ENCODE measurements at regions of chr12 and their contacts with region 1.

Region 1: DNA sequence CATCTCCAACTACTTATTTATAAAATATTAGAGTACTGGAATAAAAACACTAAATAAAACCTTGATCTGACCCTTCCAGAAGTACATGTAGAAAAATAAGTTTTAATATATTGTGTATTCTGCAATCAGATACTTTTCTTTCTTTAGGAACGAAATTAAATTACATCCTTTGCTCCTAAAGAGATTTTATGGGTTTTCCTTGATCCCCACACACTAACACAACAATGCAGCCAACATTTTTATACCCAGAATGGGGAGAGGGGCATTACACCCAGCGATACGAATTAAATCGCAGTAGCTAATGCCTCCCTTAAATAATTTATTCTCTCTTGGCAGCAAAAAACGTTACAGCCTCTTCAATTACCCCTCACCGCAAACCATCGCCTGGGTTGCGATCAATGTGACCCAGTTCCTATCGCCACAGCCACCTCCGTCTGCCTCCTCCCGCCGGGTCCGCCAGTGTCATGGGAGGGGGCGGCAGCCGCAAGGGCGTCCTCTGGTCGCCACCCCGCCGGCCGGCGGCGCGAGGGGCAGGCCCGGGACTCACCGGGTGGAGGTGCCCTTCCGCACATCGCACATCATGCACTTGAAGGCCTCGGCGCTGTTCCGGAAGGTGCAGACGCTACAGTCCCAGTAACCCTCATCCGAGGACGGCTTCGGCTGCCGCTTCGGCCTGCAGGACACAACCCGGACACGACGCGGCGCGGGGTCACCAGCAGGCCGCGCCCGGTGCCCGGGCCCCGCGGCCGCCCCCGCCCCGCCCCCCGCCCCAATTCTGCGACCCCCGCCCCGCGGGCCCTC is 796 bp downstream of the YAF2 start:
- DNase-seq: peak; percentile 82 to 86
- ATAC-seq: peak; percentile 86

Region 2: DNA sequence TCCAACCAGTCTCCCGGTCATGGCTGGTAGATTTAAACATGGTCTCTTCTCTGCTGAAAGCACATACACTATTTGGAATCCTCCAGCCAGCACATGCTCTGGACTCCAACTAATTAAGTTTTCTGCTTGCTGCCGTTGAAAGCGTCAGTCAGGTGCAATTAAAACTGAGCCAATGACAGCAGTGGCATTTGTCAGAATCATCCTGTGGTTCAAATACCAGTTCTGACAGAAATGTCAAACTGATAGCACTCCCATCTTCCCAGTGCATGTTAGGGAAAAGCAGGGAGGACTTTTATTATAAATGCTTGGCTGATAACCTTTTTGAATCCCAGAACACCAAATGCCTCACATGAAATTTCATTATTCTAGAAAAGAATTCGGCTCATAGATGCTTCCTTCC is 647.4 kb before region 1 on chr12:
- intact Hi-C with region 1: no loop called
- DNase-seq: no peak
- ATAC-seq: no peak

Region 3: DNA sequence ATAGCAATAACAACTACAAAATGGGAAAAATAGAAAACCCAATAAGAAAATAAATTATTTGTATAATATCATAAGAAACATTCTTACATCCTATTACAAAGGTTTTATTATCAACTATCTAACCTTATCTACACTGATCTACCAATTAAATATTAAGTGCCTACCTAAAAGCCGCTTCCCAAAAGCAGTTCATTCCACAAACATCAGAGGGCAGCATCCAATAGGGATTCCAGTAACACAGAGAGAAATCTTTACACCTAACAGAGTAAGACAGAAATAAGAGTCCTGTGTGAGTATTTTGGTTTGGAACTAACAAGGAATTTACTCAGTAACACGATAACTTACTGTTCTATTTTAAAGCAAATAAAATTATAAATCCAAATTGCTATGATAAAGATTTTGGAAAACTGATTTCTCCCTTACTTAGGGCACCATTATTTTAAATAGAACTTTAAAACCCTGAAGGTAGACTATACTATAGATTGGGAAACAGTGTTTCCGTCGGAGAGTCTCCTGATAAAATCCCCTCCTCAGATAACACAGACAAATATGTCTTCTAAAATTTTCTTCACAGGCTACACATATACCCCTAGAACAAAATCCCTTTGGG is 107.6 kb before region 1 on chr12:
- intact Hi-C with region 1: loop called in 1 of 2 experiments (anchors 5 kb)
- DNase-seq: no peak
- ATAC-seq: peak; percentile 75

Region 4: GRCh38 chr12:42325653-42326474 is 88.6 kb after region 1 on chr12 and contains the starts of genes PPHLN1 and ZCRB1:
- intact Hi-C with region 1: loop called in 1 of 2 experiments (anchors 10 kb)
- DNase-seq: peak; percentile 83 to 92
- ATAC-seq: peak; percentile 99
- total RNA-seq, gene PPHLN1: 38.2 to 38.5 TPM
- total RNA-seq, gene ZCRB1: 31.3 to 31.6 TPM

Region 5: GRCh38 chr12:42524716-42525115 is 287.5 kb after region 1 on chr12:
- intact Hi-C with region 1: no loop called
- DNase-seq: no peak
- ATAC-seq: no peak

Region 6: DNA sequence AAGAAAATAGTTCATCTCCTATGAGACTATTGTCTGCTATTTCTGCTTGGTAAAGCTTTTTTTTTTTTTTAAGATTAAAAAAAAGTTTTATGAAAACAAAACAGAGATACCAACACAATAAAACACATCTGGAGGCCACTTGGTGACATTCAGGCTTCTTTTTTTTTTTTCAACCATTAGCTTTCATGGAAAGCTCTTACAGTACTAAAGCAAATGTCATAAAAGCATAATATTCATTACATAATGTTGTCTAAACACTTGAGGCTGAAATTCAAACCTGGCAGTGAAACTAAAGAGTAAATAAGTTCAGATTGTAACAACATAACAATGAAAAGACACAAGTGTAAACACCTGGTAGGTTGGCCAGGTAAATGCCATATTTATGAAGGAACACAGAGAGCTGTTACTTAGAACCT is 337.6 kb after region 1 on chr12:
- intact Hi-C with region 1: loop called in 1 of 2 experiments (anchors 10 kb)
- DNase-seq: no peak
- ATAC-seq: no peak